ENCODE measurements at regions of chr5 and their contacts with region 1.

Region 1: DNA sequence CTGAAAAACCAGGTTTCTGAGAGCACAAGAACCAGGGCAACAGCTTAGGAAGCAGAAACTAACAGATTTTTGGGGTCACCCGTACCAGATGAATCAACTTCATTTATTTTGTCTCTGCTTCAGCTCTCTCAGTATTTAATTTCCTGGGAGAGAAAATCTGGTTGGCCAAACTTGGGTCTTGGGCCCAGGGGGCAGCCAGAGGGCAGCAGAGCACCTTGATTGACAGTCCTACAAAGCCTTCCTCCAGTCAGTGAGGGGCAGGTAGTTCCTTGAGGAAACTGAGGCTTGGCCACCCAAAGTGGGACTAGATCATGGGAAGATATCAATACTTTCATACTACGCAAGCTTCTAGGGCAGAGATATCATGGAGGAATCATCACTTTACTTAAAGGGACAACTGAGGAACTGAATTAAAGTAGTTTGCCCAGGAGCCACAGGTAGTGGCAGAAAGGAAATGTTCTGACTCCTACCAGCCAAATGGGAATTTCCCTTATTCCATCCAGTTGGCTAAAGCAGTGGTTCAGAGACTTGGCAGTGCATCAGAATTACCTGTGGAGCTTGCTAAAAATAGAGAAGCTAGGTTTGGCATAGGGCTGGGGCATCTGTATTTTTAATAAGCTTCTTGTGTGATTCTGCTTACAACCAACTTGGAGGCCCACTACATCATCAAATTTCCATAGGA is 21.5 kb upstream of the ARHGAP26 start:
- DNase-seq: peak; percentile 74
- ATAC-seq: peak; percentile 72
- H3K4me3 Mint-ChIP-seq: no peak overlapping the region
- H3K27ac Mint-ChIP-seq: no peak overlapping the region
- H3K4me1 Mint-ChIP-seq: peaks cover 17% of the 10 kb centered on the region
- H3K27me3 Mint-ChIP-seq: no peaks in the 10 kb centered on the region
- CTCF ChIP-seq: peak; percentile 81

Region 2: DNA sequence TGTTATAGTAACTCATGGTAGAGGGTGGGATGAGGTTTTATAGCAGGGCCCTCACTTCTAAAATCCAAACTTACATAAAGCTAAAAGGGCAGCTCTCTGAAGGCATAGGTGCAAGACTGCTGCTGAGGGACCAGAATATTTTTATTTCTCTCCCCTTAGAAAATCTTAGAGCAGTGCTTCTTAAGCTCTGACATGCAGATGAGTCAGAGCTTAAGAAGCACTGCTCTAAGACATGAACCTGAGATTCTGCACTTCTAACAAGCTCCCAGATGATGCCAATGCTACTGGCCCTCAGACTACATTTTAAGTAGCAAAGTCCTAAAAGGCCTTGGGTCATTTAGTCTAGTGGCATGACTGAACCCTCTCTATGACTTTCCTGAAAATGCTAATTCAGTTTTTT is 326.3 kb before region 1 on chr5:
- CTCF ChIA-PET with region 1: no interaction called
- POLR2A ChIA-PET with region 1: no interaction called
- intact Hi-C with region 1: no loop called
- DNase-seq: no peak
- ATAC-seq: no peak
- H3K4me3 Mint-ChIP-seq: no peak overlapping the region
- H3K27ac Mint-ChIP-seq: no peak overlapping the region
- H3K4me1 Mint-ChIP-seq: peaks cover 36% of the 10 kb centered on the region
- H3K27me3 Mint-ChIP-seq: no peaks in the 10 kb centered on the region
- CTCF ChIP-seq: no peak

Region 3: GRCh38 chr5:142512043-142513042 is 236.4 kb before region 1 on chr5:
- CTCF ChIA-PET with region 1: no interaction called
- POLR2A ChIA-PET with region 1: no interaction called
- intact Hi-C with region 1: no loop called
- DNase-seq: no peak
- ATAC-seq: no peak
- H3K4me3 Mint-ChIP-seq: no peak overlapping the region
- H3K27ac Mint-ChIP-seq: no peak overlapping the region
- H3K4me1 Mint-ChIP-seq: peaks cover 18% of the 10 kb centered on the region
- H3K27me3 Mint-ChIP-seq: peaks cover 3% of the 10 kb centered on the region
- CTCF ChIP-seq: no peak

Region 4: GRCh38 chr5:142713121-142713706 is 35.5 kb before region 1 on chr5:
- CTCF ChIA-PET with region 1: interaction called, 125 read pairs
- POLR2A ChIA-PET with region 1: interaction called, 3 read pairs
- intact Hi-C with region 1: no loop called
- DNase-seq: peak; percentile 92
- ATAC-seq: peak; percentile 97
- H3K4me3 Mint-ChIP-seq: peak overlapping the region; percentile 72
- H3K27ac Mint-ChIP-seq: peak overlapping the region; percentile 40
- H3K4me1 Mint-ChIP-seq: peaks cover 5% of the 10 kb centered on the region
- H3K27me3 Mint-ChIP-seq: no peaks in the 10 kb centered on the region
- CTCF ChIP-seq: peak; percentile 93

Region 5: GRCh38 chr5:142726188-142726731 is 22.4 kb before region 1 on chr5:
- CTCF ChIA-PET with region 1: interaction called, 30 read pairs
- POLR2A ChIA-PET with region 1: no interaction called
- intact Hi-C with region 1: no loop called
- DNase-seq: no peak
- ATAC-seq: peak; percentile 49
- H3K4me3 Mint-ChIP-seq: no peak overlapping the region
- H3K27ac Mint-ChIP-seq: peak overlapping the region; percentile 35
- H3K4me1 Mint-ChIP-seq: peaks cover 9% of the 10 kb centered on the region
- H3K27me3 Mint-ChIP-seq: no peaks in the 10 kb centered on the region
- CTCF ChIP-seq: no peak

Region 6: DNA sequence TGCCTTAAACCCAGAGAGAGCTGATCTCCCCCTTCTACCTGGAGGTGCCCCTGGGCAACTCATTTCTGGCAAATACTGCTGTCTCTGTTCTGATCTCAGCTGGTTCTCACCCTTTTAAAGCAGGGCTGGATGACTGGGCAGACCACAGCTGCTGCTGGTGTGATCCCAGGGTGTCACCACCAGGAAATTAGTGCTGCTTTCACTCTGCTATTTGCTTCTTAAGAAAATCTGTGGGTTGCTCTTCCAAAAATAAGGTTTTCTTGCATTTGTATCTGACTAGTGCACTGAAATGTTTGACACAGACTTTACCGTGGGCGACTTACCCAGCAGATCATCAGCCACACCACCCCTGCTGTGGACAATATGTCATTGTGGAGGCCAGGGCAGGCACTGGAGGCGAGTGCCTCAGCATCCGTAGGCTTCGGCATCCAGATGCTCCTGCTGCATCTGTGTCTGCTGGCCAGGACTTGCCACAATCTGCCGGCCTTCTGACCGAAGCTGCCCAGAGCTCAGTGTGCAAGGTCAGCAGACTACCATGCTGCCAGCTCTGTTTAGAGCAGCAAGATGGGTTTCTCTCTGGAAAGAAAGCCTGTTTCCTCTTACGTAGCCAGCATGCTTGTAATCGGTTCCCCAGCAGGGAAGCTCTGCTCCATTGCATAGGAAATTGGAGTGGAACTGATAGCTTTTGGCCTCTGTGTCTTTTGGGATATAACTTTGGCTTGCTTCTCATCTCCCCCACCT is 35.1 kb after region 1 on chr5:
- CTCF ChIA-PET with region 1: interaction called, 14 read pairs
- POLR2A ChIA-PET with region 1: no interaction called
- intact Hi-C with region 1: no loop called
- DNase-seq: peak; percentile 90
- ATAC-seq: peak; percentile 87
- H3K4me3 Mint-ChIP-seq: peak overlapping the region; percentile 58
- H3K27ac Mint-ChIP-seq: peak overlapping the region; percentile 84
- H3K4me1 Mint-ChIP-seq: peaks cover 72% of the 10 kb centered on the region
- H3K27me3 Mint-ChIP-seq: no peaks in the 10 kb centered on the region
- CTCF ChIP-seq: no peak

Region 7: GRCh38 chr5:142814499-142814875 is 65.8 kb after region 1 on chr5:
- CTCF ChIA-PET with region 1: no interaction called
- POLR2A ChIA-PET with region 1: no interaction called
- intact Hi-C with region 1: no loop called
- DNase-seq: no peak
- ATAC-seq: no peak
- H3K4me3 Mint-ChIP-seq: no peak overlapping the region
- H3K27ac Mint-ChIP-seq: no peak overlapping the region
- H3K4me1 Mint-ChIP-seq: peaks cover 40% of the 10 kb centered on the region
- H3K27me3 Mint-ChIP-seq: no peaks in the 10 kb centered on the region
- CTCF ChIP-seq: no peak

Region 8: GRCh38 chr5:142845402-142845921 is 96.8 kb after region 1 on chr5:
- CTCF ChIA-PET with region 1: interaction called, 13 read pairs
- POLR2A ChIA-PET with region 1: no interaction called
- intact Hi-C with region 1: no loop called
- DNase-seq: peak; percentile 23
- ATAC-seq: peak; percentile 75
- H3K4me3 Mint-ChIP-seq: peak overlapping the region; percentile 18
- H3K27ac Mint-ChIP-seq: peak overlapping the region; percentile 86
- H3K4me1 Mint-ChIP-seq: peaks cover 54% of the 10 kb centered on the region
- H3K27me3 Mint-ChIP-seq: no peaks in the 10 kb centered on the region
- CTCF ChIP-seq: no peak

Region 9: DNA sequence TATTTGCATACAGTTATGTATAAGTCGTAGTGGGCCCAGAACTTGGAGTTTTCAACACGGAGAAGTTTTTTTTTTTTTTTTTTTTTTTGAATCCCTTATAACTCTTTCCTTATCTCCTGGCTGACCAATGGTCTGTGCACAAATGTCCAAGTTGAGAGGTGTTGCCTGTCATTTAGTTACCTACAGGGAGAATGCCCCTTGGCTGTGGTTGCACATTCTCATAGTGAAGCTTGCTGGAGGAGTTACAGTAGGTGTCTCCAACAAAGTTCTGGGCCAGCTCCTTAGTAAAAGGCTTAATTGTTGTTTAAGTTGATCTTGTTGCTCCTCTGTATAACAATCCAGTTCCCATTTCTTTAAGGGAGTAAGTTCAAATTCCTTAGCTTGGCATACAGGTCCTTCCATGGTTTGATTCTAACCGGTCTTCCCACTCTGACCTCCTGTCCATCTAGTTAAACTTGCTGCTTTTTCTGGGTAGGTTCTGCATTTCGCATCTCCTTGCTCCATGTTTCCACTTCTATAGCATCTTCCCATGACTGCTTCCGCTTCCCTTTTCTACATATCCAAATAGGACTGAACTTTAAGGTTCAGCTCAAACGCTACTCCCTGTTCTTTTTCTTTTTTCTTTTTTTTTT is 116.8 kb after region 1 on chr5:
- CTCF ChIA-PET with region 1: interaction called, 1,012 read pairs
- POLR2A ChIA-PET with region 1: no interaction called
- intact Hi-C with region 1: loop called (anchors 2 kb)
- DNase-seq: no peak
- ATAC-seq: no peak
- H3K4me3 Mint-ChIP-seq: no peak overlapping the region
- H3K27ac Mint-ChIP-seq: no peak overlapping the region
- H3K4me1 Mint-ChIP-seq: peaks cover 54% of the 10 kb centered on the region
- H3K27me3 Mint-ChIP-seq: no peaks in the 10 kb centered on the region
- CTCF ChIP-seq: no peak

Region 10: DNA sequence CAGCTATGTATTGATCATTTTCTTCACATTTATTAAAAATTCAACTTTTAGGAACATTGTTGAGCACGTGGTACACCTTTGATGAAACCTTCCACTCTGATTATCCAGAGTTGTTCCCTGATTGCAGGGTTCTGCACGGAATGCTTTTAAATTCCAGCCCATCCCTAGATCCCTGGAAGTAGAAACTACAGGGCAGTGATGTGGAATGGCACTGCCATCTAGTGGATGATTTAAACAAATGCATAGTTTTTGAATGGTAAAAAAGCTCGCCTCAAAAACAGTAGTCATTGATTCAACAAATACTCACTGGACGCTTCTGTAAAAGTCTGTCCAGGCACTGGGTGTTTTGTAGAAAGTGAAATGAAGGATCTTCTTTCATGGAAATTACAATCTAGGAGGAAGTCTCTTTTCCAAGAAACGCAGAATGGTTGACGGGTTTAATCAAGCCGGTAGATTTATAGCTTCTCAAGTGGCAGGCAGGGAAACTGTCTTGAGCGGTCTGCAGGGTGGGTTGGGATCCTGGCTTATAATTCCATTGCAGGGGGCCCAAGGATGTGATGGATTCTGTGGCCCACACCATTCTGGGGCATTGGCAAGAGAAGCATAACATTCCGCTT is 139.9 kb after region 1 on chr5:
- CTCF ChIA-PET with region 1: interaction called, 1,012 read pairs
- POLR2A ChIA-PET with region 1: interaction called, 5 read pairs
- intact Hi-C with region 1: no loop called
- DNase-seq: no peak
- ATAC-seq: no peak
- H3K4me3 Mint-ChIP-seq: no peak overlapping the region
- H3K27ac Mint-ChIP-seq: no peak overlapping the region
- H3K4me1 Mint-ChIP-seq: peaks cover 8% of the 10 kb centered on the region
- H3K27me3 Mint-ChIP-seq: no peaks in the 10 kb centered on the region
- CTCF ChIP-seq: peak; percentile 93

Measured in activated CD8-positive, alpha-beta T cell treated with anti-CD3 and anti-CD28 coated beads for 36 hours (primary cell).